ENCODE measurements at regions of chr13 and their contacts with region 1.

Region 1: GRCh38 chr13:31538067-31539042 is 201.0 kb upstream of the RXFP2 start:
- DNase-seq: peak; percentile 49
- H3K4me3 ChIP-seq: no peak overlapping the region
- H3K27ac ChIP-seq: no peak overlapping the region
- H3K4me1 ChIP-seq: peaks cover 5% of the 10 kb centered on the region
- H3K27me3 ChIP-seq: peaks cover 5 to 14% of the 10 kb centered on the region in 2 experiments
- CTCF ChIP-seq: peak; percentile 58 to 63
- POLR2A ChIP-seq: no peak

Region 2: DNA sequence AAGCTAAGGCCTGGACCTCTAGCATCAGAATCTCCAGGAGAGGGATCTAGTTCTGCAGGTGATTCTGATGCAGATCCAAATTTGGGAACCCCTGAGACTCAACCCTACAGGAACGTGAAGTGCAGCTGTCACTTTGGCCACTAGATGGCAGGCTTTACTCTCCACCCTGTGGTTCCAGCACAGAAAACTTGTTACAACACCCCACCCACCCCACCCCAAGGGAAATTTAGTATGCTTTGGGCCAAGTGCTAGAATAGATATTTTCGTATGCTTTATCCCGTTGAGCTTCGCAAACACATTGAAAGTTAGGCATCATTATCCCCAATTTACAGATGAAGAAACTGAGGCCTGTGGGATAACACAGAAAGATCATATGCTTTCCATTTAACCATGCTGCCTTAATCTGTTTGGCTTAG is 106.6 kb before region 1 on chr13:
- CTCF ChIA-PET with region 1: interaction called, 15 read pairs
- POLR2A ChIA-PET with region 1: no interaction called
- dilution Hi-C with region 1: no loop called
- intact Hi-C with region 1: loop called (anchors 2 kb)
- DNase-seq: peak; percentile 33
- H3K4me3 ChIP-seq: no peak overlapping the region
- H3K27ac ChIP-seq: no peak overlapping the region
- H3K4me1 ChIP-seq: peaks cover 5% of the 10 kb centered on the region
- H3K27me3 ChIP-seq: peaks cover 5 to 9% of the 10 kb centered on the region in 2 experiments
- CTCF ChIP-seq: peak; percentile 46 to 84
- POLR2A ChIP-seq: no peak

Region 3: DNA sequence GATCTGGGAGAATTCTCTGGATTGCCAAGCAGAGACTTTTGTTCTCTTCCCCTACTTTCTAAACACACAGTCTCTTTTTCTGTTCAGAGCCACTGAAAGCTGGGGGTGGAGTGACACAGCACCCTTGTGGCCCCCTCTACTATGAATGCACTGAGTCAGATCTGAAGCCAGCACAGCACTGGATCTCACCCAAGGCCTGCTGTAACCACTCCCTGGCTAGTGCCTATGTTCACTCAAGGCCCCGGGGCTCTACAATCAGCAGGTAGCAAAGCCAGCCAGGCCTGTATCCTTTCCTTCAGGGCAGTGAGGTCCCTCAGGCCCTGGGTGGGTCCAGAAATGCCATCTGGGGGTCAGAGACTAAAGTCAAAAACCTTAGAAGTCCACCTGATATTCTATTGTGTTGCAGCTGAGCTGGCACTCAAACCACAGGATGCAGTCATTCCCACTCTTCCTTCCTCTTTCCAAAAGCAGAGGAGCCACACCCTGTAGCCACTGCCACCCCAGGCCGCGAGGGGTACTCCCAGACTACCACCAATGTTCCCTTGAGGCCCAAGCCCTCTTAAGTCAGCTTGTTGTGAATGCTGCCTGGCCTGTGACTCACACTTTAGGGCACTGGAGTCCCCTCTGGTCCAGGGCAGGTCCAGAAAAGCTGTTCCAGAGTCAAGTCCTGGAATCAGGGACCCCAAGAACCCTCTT is 90.9 kb after region 1 on chr13:
- CTCF ChIA-PET with region 1: interaction called, 15 read pairs
- POLR2A ChIA-PET with region 1: no interaction called
- dilution Hi-C with region 1: no loop called
- intact Hi-C with region 1: no loop called
- DNase-seq: peak; percentile 33
- H3K4me3 ChIP-seq: no peak overlapping the region
- H3K27ac ChIP-seq: peak overlapping the region; percentile 11
- H3K4me1 ChIP-seq: peaks cover 31% of the 10 kb centered on the region
- H3K27me3 ChIP-seq: no peaks in the 10 kb centered on the region
- CTCF ChIP-seq: no peak
- POLR2A ChIP-seq: no peak

Region 4: DNA sequence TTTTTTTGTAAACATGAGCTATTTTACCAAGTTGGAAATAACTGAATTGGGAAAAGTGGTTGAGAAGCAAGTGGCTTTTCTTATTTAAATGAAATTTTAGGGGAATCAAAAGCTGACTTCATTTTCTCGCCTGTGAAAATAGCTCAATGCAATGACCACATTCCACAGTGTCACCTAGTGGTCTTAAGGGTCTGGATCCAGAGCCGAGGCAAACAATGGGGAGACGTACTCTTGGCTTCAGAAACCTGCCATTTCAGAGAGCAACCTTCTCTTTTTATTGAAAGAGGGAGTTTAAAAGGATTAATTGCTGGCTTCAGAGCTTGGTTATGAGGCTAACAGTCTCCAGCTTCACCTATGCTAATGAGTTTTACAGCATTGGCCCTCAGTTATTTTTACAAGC is 161.3 kb after region 1 on chr13:
- CTCF ChIA-PET with region 1: interaction called, 323 read pairs
- POLR2A ChIA-PET with region 1: interaction called, 7 read pairs
- dilution Hi-C with region 1: no loop called
- intact Hi-C with region 1: loop called (anchors 1 kb)
- DNase-seq: peak; percentile 47
- H3K4me3 ChIP-seq: no peak overlapping the region
- H3K27ac ChIP-seq: no peak overlapping the region
- H3K4me1 ChIP-seq: no peaks in the 10 kb centered on the region
- H3K27me3 ChIP-seq: peaks cover 4 to 6% of the 10 kb centered on the region in 2 experiments
- CTCF ChIP-seq: peak; percentile 40 to 62
- POLR2A ChIP-seq: no peak

Region 5: DNA sequence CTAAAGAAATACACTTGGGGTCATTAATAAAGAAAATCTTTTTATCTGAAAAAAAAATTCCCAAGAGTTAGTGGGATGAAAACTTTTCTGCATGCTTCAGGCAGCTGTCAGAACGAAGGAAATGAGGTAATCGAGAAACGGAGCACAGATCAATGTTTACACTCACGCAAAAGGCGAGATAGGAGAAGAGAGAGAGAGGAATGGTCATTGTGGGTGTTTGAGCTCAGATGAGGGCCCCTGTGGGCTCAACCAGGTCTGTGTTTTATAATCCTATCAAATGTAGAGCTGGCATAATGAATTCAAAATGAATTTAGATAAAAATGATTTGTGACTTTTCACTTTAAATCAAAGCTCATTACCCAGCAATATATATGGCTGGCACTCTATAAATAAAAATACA is 194.7 kb after region 1 on chr13:
- CTCF ChIA-PET with region 1: interaction called, 42 read pairs
- POLR2A ChIA-PET with region 1: no interaction called
- dilution Hi-C with region 1: no loop called
- intact Hi-C with region 1: no loop called
- DNase-seq: peak; percentile 47
- H3K4me3 ChIP-seq: peak overlapping the region in 1 of 3 experiments; percentile 15
- H3K27ac ChIP-seq: no peak overlapping the region
- H3K4me1 ChIP-seq: peaks cover 18% of the 10 kb centered on the region
- H3K27me3 ChIP-seq: peaks cover 0 to 8% of the 10 kb centered on the region in 2 experiments
- CTCF ChIP-seq: no peak
- POLR2A ChIP-seq: no peak

Measured in endothelial cell of umbilical vein (primary cell).